ENCODE measurements at regions of chr4 and their contacts with region 1.

Region 1: GRCh38 chr4:168955674-168956073 is 54.4 kb downstream of the CBR4 start:
- DNase-seq: no peak
- H3K4me3 ChIP-seq: no peak overlapping the region
- H3K27ac ChIP-seq: no peak overlapping the region
- H3K4me1 ChIP-seq: no peaks in the 10 kb centered on the region
- CTCF ChIP-seq: no peak

Region 2: GRCh38 chr4:169383724-169384123 is 428.1 kb after region 1 on chr4:
- CTCF ChIA-PET with region 1: no interaction called
- POLR2A ChIA-PET with region 1: interaction called, 3 read pairs
- intact Hi-C with region 1: loop called (anchors 5 kb)
- DNase-seq: no peak
- H3K4me3 ChIP-seq: no peak overlapping the region
- H3K27ac ChIP-seq: no peak overlapping the region
- H3K4me1 ChIP-seq: no peaks in the 10 kb centered on the region
- CTCF ChIP-seq: no peak